GM12878 (cell line): ENCODE measurements at regions of chr19 and their contacts with region 1.

Region 1: DNA sequence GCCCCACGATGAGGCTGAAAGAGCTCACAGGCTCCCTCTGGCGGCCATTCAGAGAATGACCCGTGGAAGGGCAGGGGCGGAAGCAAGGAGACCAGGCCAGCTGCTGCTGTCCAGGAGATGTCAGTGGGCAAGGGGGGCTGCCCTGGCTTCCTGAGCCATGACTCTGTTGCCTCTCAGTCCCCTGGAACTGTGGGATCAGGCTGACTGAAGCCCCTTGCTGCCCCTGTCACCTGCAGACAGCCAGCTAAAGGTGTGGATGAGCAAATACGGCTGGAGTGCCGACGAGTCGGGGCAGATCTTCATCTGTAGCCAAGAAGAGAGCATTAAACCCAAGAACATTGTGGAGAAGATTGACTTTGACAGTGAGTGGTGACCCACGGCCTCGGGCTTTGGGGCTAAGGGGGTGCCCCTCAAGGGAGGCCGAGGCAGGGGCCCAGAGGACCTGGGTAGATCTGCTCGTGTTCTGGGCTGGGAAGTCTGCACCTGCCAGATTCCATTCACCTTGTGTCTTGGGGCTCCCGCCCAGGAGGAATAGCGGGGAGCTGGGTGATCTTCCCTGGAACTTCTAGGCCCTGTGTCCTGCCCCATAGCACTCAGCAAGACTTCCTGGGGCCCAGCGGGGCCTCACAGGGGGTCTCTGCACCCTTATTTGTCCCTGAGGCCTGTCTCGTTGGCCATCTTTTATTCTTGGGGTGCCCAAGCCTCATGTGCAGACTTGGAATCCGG is 12.5 kb upstream of the ACTN4 start:
- DNase-seq: peak; percentile 32
- ATAC-seq: peak; percentile 73
- H3K4me3 ChIP-seq: no peak overlapping the region
- H3K27ac ChIP-seq: no peak overlapping the region; the same call in 1 of the 2 replicates
- H3K4me1 ChIP-seq: peaks cover 15% of the 10 kb centered on the region
- H3K27me3 ChIP-seq: no peaks in the 10 kb centered on the region
- CTCF ChIP-seq: peak; percentile 86 to 91 (median 88)
- EP300 ChIP-seq: no peak
- POLR2A ChIP-seq: 0 out of 2 replicates have a peak, but pooled peaks have one; percentile 27
- RAD21 ChIP-seq: peak; percentile 83

Region 2: GRCh38 chr19:38514812-38515633 is 119.9 kb before region 1 on chr19:
- CTCF ChIA-PET with region 1: interaction called, 52 read pairs
- POLR2A ChIA-PET with region 1: interaction called, 5 read pairs
- RAD21 ChIA-PET with region 1: interaction called, 5 read pairs
- SMC1A ChIA-PET with region 1: interaction called, 9 read pairs
- in situ Hi-C with region 1: no loop called
- intact Hi-C with region 1: loop called (anchors 2 kb)
- DNase-seq: no peak
- ATAC-seq: peak; percentile 96
- H3K4me3 ChIP-seq: no peak overlapping the region
- H3K27ac ChIP-seq: no peak overlapping the region
- H3K4me1 ChIP-seq: peaks cover 6% of the 10 kb centered on the region
- H3K27me3 ChIP-seq: no peaks in the 10 kb centered on the region
- CTCF ChIP-seq: peak; percentile 89 to 98 (median 90); a peak in 5 of 6 replicates
- EP300 ChIP-seq: no peak
- POLR2A ChIP-seq: no peak
- RAD21 ChIP-seq: peak; percentile 74

Region 3: GRCh38 chr19:38544034-38544958 is 90.6 kb before region 1 on chr19:
- CTCF ChIA-PET with region 1: interaction called, 103 read pairs
- POLR2A ChIA-PET with region 1: interaction called, 10 read pairs
- RAD21 ChIA-PET with region 1: interaction called, 70 read pairs
- SMC1A ChIA-PET with region 1: interaction called, 102 read pairs
- in situ Hi-C with region 1: no loop called
- intact Hi-C with region 1: loop called (anchors 1 kb)
- DNase-seq: peak; percentile 64
- ATAC-seq: peak; percentile 93
- H3K4me3 ChIP-seq: peak overlapping the region; percentile 25; the same call in 1 of the 2 replicates
- H3K27ac ChIP-seq: no peak overlapping the region
- H3K4me1 ChIP-seq: peaks cover 9% of the 10 kb centered on the region; the same call in 1 of the 2 replicates
- H3K27me3 ChIP-seq: no peaks in the 10 kb centered on the region
- CTCF ChIP-seq: peak; percentile 52 to 81 (median 69); a peak in 5 of 6 replicates
- EP300 ChIP-seq: no peak
- POLR2A ChIP-seq: no peak
- RAD21 ChIP-seq: peak; percentile 91

Region 4: GRCh38 chr19:38551450-38551813 is 83.5 kb before region 1 on chr19:
- CTCF ChIA-PET with region 1: interaction called, 67 read pairs
- POLR2A ChIA-PET with region 1: interaction called, 5 read pairs
- RAD21 ChIA-PET with region 1: interaction called, 70 read pairs
- SMC1A ChIA-PET with region 1: interaction called, 102 read pairs
- in situ Hi-C with region 1: no loop called
- intact Hi-C with region 1: loop called (anchors 2 kb)
- DNase-seq: peak; percentile 52
- ATAC-seq: peak; percentile 87
- H3K4me3 ChIP-seq: no peak overlapping the region
- H3K27ac ChIP-seq: no peak overlapping the region
- H3K4me1 ChIP-seq: peaks cover 31% of the 10 kb centered on the region
- H3K27me3 ChIP-seq: no peaks in the 10 kb centered on the region
- CTCF ChIP-seq: no peak
- EP300 ChIP-seq: peak; percentile 87 to 92; a peak in 3 of 4 replicates
- POLR2A ChIP-seq: no peak
- RAD21 ChIP-seq: no peak

Region 5: DNA sequence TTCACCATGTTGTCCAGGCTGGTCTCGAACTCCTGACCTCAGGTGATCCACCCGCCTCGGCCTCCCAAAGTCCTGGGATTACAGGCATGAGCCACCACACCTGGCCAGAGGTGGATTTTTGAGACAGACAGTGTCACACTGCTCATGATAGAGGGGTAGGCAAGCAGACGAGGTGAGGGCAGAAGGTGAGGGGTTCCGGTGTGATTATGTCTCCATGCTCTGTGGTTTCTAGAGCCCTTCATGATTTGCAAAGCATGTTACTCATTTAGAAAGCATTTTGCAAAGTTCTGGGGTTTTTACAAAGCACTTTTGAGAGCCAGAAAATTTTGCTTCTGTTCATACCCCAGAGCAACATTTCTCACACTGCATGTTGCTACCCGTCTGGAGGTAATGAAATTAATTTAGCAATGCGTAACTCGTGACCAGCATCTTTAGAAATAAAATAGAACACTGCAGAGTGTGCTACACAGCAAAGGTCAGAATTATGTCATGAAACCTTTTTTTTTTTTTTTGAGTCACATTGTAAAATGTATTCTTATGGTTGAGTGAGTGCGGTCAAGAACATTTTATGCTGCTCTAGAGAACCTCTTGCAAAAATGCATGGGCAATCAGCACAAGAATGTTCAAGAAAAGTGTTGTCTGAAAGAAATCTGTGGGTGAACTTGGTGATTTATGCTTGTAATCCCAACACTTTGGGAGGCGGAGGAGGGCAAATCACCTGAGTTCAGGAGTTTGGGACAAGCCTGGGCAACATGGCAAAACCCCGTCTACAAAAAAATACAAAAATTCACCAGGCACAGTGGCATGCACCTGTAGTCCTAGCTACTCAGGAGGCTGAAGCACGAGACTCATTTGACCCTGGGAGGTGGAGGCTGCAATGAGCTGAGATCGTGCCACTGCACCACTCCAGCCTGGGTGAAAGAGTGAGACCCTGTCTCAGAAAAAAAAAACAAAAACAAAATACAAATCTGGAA is 75.2 kb before region 1 on chr19:
- CTCF ChIA-PET with region 1: interaction called, 67 read pairs
- POLR2A ChIA-PET with region 1: interaction called, 4 read pairs
- RAD21 ChIA-PET with region 1: interaction called, 29 read pairs
- SMC1A ChIA-PET with region 1: interaction called, 25 read pairs
- in situ Hi-C with region 1: no loop called
- intact Hi-C with region 1: loop called (anchors 2 kb)
- DNase-seq: peak; percentile 99
- ATAC-seq: peak; percentile 81
- H3K4me3 ChIP-seq: no peak overlapping the region; the same call in 1 of the 2 replicates
- H3K27ac ChIP-seq: peak overlapping the region; percentile 70
- H3K4me1 ChIP-seq: peaks cover 53% of the 10 kb centered on the region
- H3K27me3 ChIP-seq: 0 out of 4 replicates have a peak, but pooled peaks cover 0 to under 1% of the 10 kb centered on the region in 2 experiments
- CTCF ChIP-seq: no peak
- EP300 ChIP-seq: peak; percentile 94 to 96
- POLR2A ChIP-seq: no peak
- RAD21 ChIP-seq: peak; percentile 19; the same call in 1 of the 2 replicates

Region 6: GRCh38 chr19:38592940-38593339 is 42.0 kb before region 1 on chr19:
- CTCF ChIA-PET with region 1: interaction called, 12 read pairs
- POLR2A ChIA-PET with region 1: no interaction called
- RAD21 ChIA-PET with region 1: interaction called, 4 read pairs
- SMC1A ChIA-PET with region 1: no interaction called
- in situ Hi-C with region 1: no loop called
- intact Hi-C with region 1: no loop called
- DNase-seq: no peak
- ATAC-seq: peak; percentile 28; the same call in 1 of the 3 replicates
- H3K4me3 ChIP-seq: no peak overlapping the region
- H3K27ac ChIP-seq: no peak overlapping the region
- H3K4me1 ChIP-seq: no peaks in the 10 kb centered on the region
- H3K27me3 ChIP-seq: no peaks in the 10 kb centered on the region
- CTCF ChIP-seq: no peak
- EP300 ChIP-seq: no peak
- POLR2A ChIP-seq: no peak
- RAD21 ChIP-seq: no peak

Region 7: DNA sequence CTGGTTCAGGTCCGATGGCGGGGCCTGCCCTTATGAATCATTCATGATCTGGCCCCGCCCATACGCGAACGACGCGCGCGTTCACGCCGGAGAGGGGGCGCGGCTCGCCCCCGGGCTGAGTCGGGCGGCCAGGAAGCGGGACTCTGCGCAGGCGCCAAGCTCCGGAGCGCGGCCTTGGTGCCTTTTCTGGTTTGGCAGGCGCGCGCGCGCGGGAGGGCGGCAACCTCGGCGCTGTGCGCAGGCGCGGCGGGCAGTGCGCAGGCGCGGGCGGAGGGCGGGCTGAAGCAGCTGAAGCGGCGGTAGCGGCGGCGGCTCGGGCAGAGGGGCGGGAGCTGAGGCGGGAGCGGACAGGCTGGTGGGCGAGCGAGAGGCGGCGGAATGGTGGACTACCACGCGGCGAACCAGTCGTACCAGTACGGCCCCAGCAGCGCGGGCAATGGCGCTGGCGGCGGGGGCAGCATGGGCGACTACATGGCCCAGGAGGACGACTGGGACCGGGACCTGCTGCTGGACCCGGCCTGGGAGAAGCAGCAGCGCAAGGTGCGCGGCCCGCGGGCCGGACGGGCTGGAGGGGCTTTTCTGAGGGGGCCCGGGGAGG is 12.5 kb after region 1 on chr19 and contains the start of gene ACTN4:
- CTCF ChIA-PET with region 1: interaction called, 53 read pairs
- POLR2A ChIA-PET with region 1: interaction called, 3 read pairs
- RAD21 ChIA-PET with region 1: interaction called, 11 read pairs
- SMC1A ChIA-PET with region 1: interaction called, 4 read pairs
- in situ Hi-C with region 1: no loop called
- intact Hi-C with region 1: no loop called
- DNase-seq: peak; percentile 78
- ATAC-seq: peak; percentile 91
- H3K4me3 ChIP-seq: peak within 1 kb of the TSS; percentile 100
- H3K27ac ChIP-seq: peak within 1 kb of the TSS; percentile 79
- H3K4me1 ChIP-seq: peaks cover 13% of the 10 kb centered on the region
- H3K27me3 ChIP-seq: no peaks in the 10 kb centered on the region
- CTCF ChIP-seq: no peak
- EP300 ChIP-seq: no peak
- POLR2A ChIP-seq: peak; percentile 99
- RAD21 ChIP-seq: no peak
- polyA plus RNA-seq, gene ACTN4: 2.4 to 6.7 TPM

Region 8: DNA sequence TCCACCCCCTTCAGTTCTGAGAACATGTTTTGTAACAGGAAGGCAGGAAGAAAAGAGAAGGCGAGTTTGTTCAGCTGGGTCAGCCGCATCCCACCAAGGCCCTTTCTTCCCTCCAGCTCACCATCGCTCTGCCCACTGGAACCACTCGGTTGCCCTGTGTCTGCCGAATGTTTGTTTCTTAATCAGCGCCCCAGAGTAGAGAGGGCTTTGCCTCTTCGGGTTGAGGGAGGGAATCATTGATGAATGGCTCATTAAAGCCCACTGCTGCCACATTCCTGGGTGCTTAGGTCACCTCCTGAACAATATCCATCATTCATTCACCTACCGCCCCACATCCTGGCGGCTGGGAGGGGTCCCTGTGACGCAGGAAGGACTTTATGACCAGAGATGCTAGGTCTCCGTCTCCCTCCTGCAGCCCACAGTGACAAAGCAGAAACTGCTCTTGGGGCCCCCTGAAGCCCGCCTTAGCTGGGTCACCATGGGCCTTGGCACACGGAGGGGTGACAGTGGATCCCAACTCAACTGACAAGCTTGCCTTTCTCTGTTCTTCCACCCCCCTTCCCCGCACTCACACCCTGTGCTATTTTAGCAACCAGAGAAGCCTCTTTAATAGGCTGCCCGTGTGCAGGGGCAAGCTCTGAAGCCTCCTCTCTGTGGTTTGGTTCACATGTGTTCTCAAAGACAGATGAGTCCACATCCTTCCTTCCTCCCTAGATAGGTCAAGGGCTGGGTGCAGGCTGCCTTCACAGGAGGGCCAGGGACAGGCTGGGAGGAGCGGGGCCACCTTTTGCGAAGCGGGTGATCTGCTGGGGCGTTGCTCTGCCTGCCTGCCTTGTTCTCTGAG is 58.7 kb after region 1 on chr19:
- CTCF ChIA-PET with region 1: no interaction called
- POLR2A ChIA-PET with region 1: no interaction called
- RAD21 ChIA-PET with region 1: no interaction called
- SMC1A ChIA-PET with region 1: no interaction called
- in situ Hi-C with region 1: no loop called
- intact Hi-C with region 1: no loop called
- DNase-seq: no peak
- ATAC-seq: no peak
- H3K4me3 ChIP-seq: 0 out of 2 replicates have a peak overlapping the region, but pooled peaks have one; percentile 36
- H3K27ac ChIP-seq: peak overlapping the region; percentile 64
- H3K4me1 ChIP-seq: peaks cover 48% of the 10 kb centered on the region
- H3K27me3 ChIP-seq: no peaks in the 10 kb centered on the region
- CTCF ChIP-seq: no peak
- EP300 ChIP-seq: no peak
- POLR2A ChIP-seq: no peak
- RAD21 ChIP-seq: no peak